ENCODE measurements at regions of chr22 and their contacts with region 1.

Region 1: DNA sequence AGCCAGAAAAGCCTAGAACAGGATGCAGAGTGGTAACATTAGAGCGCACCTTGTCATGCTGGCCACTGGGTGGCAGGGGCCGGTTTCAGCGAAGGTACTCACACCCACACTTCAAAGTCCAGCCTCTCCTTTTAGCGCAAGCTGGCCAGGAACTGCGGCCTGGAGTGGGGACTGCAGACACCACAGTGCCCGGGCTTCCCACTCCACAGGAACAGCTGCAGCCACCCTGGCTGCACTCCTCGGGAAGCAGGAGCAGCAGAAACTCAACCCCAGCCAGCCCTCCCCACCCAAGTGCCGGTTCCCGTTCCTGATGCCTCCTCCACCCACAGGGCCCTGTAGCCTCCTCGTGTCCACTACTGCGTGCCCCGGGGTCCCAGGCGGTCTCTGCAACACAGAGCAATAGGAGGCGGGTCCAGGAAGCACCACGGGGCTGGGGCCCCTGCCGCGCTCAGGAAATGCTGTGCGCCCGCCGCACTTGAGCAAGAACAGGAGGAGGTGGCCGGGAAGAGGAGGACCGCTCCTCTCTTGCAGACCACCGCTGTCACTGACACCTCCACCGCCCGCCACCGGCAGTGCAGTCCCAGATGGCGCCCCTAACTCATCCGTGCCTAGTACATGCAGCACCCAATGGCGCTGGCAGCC is 2.2 kb downstream of the RFPL2 start:
- DNase-seq: no peak
- ATAC-seq: peak; percentile 66

Region 2: GRCh38 chr22:32142600-32142999 is 60.1 kb before region 1 on chr22:
- intact Hi-C with region 1: loop called (anchors 2 kb)
- DNase-seq: no peak
- ATAC-seq: no peak

Measured in Right ventricle myocardium inferior (tissue), 1 donor.